ENCODE measurements at regions of chr16 and their contacts with region 1.

Region 1: GRCh38 chr16:66406534-66407221 is 20.4 kb upstream of the BEAN1 start:
- DNase-seq: peak; percentile 75 to 97 (median 87)
- ATAC-seq: peak; percentile 75
- H3K4me3 ChIP-seq: peak overlapping the region; percentile 60 to 66
- H3K4me3 Mint-ChIP-seq: peak overlapping the region; percentile 83
- H3K27ac ChIP-seq: no peak overlapping the region
- H3K27ac Mint-ChIP-seq: no peak overlapping the region
- H3K4me1 ChIP-seq: peaks cover 21% of the 10 kb centered on the region
- H3K4me1 Mint-ChIP-seq: peaks cover 26% of the 10 kb centered on the region
- H3K27me3 ChIP-seq: no peaks in the 10 kb centered on the region
- H3K27me3 Mint-ChIP-seq: peaks cover 5% of the 10 kb centered on the region
- CTCF ChIP-seq: peak; percentile 90

Region 2: GRCh38 chr16:66289051-66289680 is 117.5 kb before region 1 on chr16:
- CTCF ChIA-PET with region 1: no interaction called
- POLR2A ChIA-PET with region 1: no interaction called
- intact Hi-C with region 1: no loop called
- DNase-seq: peak in 1 of 9 experiments; percentile 42
- ATAC-seq: no peak
- H3K4me3 ChIP-seq: no peak overlapping the region
- H3K4me3 Mint-ChIP-seq: no peak overlapping the region
- H3K27ac ChIP-seq: no peak overlapping the region
- H3K27ac Mint-ChIP-seq: no peak overlapping the region
- H3K4me1 ChIP-seq: no peaks in the 10 kb centered on the region
- H3K4me1 Mint-ChIP-seq: no peaks in the 10 kb centered on the region
- H3K27me3 ChIP-seq: peaks cover 0 to 2% of the 10 kb centered on the region in 2 experiments
- H3K27me3 Mint-ChIP-seq: peaks cover 14% of the 10 kb centered on the region
- CTCF ChIP-seq: no peak

Region 3: DNA sequence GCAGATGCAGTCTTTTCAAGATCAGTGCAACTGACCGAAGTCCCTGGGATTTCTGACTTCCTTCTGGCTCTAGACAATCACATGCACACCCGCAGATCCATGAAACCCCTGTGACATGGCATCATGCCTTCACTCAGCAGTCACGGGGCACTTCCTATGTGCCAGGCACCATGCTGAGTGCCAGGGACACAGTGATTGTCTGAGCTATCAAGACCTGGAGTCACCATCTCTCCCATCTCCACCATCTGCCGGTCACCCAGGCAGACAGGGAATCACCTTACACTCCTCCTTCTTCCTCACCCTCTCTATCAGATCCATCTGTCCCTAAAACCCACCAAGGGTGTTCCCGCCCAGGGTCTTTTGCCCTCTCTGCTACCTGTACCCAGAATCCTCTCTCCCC is 25.8 kb after region 1 on chr16:
- CTCF ChIA-PET with region 1: no interaction called
- POLR2A ChIA-PET with region 1: no interaction called
- intact Hi-C with region 1: no loop called
- DNase-seq: peak in 1 of 9 experiments; percentile 45
- ATAC-seq: no peak
- H3K4me3 ChIP-seq: no peak overlapping the region
- H3K4me3 Mint-ChIP-seq: no peak overlapping the region
- H3K27ac ChIP-seq: no peak overlapping the region
- H3K27ac Mint-ChIP-seq: no peak overlapping the region
- H3K4me1 ChIP-seq: peaks cover 10% of the 10 kb centered on the region
- H3K4me1 Mint-ChIP-seq: peaks cover 4% of the 10 kb centered on the region
- H3K27me3 ChIP-seq: peaks cover 9 to 19% of the 10 kb centered on the region in 2 experiments
- H3K27me3 Mint-ChIP-seq: peaks cover 44% of the 10 kb centered on the region
- CTCF ChIP-seq: no peak

Region 4: DNA sequence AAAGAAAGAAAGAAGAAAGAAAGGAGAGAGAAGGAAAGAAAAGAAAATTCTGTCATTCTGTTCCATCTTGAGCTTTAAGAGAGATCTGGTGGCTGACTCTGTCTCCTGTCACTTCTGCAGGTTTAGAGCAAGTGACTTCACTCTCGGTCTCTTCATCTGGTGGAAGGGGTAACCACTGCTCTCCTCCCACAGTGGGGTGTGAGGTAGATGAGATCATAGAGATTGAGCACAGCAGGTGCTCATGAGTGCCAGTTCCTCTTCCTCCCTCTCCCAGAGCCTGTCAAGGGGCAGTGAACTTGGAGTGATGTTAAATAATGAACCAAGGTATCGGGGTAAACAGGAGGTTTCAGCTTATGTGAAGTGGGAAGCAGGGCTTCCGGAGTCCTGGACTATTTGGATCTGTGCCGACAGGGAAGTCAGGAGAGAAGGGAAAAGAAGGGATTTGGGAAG is 68.1 kb after region 1 on chr16:
- CTCF ChIA-PET with region 1: interaction called, 125 read pairs
- POLR2A ChIA-PET with region 1: interaction called, 4 read pairs
- intact Hi-C with region 1: loop called in 1 of 2 experiments (anchors 1 kb)
- DNase-seq: peak in 8 of 9 experiments; percentile 28 to 85 (median 62)
- ATAC-seq: peak; percentile 90
- H3K4me3 ChIP-seq: no peak overlapping the region
- H3K4me3 Mint-ChIP-seq: no peak overlapping the region
- H3K27ac ChIP-seq: peak overlapping the region in 1 of 2 experiments; percentile 6
- H3K27ac Mint-ChIP-seq: peak overlapping the region; percentile 81
- H3K4me1 ChIP-seq: peaks cover 24% of the 10 kb centered on the region
- H3K4me1 Mint-ChIP-seq: peaks cover 26% of the 10 kb centered on the region
- H3K27me3 ChIP-seq: no peaks in the 10 kb centered on the region
- H3K27me3 Mint-ChIP-seq: no peaks in the 10 kb centered on the region
- CTCF ChIP-seq: no peak

Region 5: GRCh38 chr16:66483689-66484481 is 77.2 kb after region 1 on chr16:
- CTCF ChIA-PET with region 1: interaction called, 125 read pairs
- POLR2A ChIA-PET with region 1: interaction called, 3 read pairs
- intact Hi-C with region 1: loop called (anchors 1 kb)
- DNase-seq: peak; percentile 50 to 82 (median 76)
- ATAC-seq: peak; percentile 83
- H3K4me3 ChIP-seq: no peak overlapping the region
- H3K4me3 Mint-ChIP-seq: no peak overlapping the region
- H3K27ac ChIP-seq: no peak overlapping the region
- H3K27ac Mint-ChIP-seq: no peak overlapping the region
- H3K4me1 ChIP-seq: peaks cover 5% of the 10 kb centered on the region
- H3K4me1 Mint-ChIP-seq: peaks cover 16% of the 10 kb centered on the region
- H3K27me3 ChIP-seq: no peaks in the 10 kb centered on the region
- H3K27me3 Mint-ChIP-seq: no peaks in the 10 kb centered on the region
- CTCF ChIP-seq: peak; percentile 92

Region 6: GRCh38 chr16:66588981-66589713 is 182.5 kb after region 1 on chr16:
- CTCF ChIA-PET with region 1: interaction called, 33 read pairs
- POLR2A ChIA-PET with region 1: no interaction called
- intact Hi-C with region 1: loop called (anchors 1 kb)
- DNase-seq: peak; percentile 45 to 85 (median 70)
- ATAC-seq: peak; percentile 94
- H3K4me3 ChIP-seq: no peak overlapping the region
- H3K4me3 Mint-ChIP-seq: peak overlapping the region; percentile 83
- H3K27ac ChIP-seq: no peak overlapping the region
- H3K27ac Mint-ChIP-seq: peak overlapping the region; percentile 49
- H3K4me1 ChIP-seq: peaks cover 25% of the 10 kb centered on the region
- H3K4me1 Mint-ChIP-seq: peaks cover 24% of the 10 kb centered on the region
- H3K27me3 ChIP-seq: no peaks in the 10 kb centered on the region
- H3K27me3 Mint-ChIP-seq: no peaks in the 10 kb centered on the region
- CTCF ChIP-seq: peak; percentile 71

Region 7: GRCh38 chr16:66696669-66697630 is 290.3 kb after region 1 on chr16 and contains the start of gene CMTM4:
- CTCF ChIA-PET with region 1: no interaction called
- POLR2A ChIA-PET with region 1: no interaction called
- intact Hi-C with region 1: loop called in 1 of 2 experiments (anchors 1 kb)
- DNase-seq: peak; percentile 48 to 90 (median 75)
- ATAC-seq: peak; percentile 96
- H3K4me3 ChIP-seq: peak within 1 kb of the TSS; percentile 69 to 83
- H3K4me3 Mint-ChIP-seq: peak within 1 kb of the TSS; percentile 84
- H3K27ac ChIP-seq: no peak within 1 kb of the TSS
- H3K27ac Mint-ChIP-seq: peak within 1 kb of the TSS; percentile 41
- H3K4me1 ChIP-seq: peaks cover 19% of the 10 kb centered on the region
- H3K4me1 Mint-ChIP-seq: peaks cover 17% of the 10 kb centered on the region
- H3K27me3 ChIP-seq: no peaks in the 10 kb centered on the region
- H3K27me3 Mint-ChIP-seq: peaks cover 5% of the 10 kb centered on the region
- CTCF ChIP-seq: no peak
- total RNA-seq, gene CMTM4: 0.84 to 0.89 TPM

Region 8: GRCh38 chr16:66728117-66728787 is 321.6 kb after region 1 on chr16:
- CTCF ChIA-PET with region 1: interaction called, 6 read pairs
- POLR2A ChIA-PET with region 1: no interaction called
- intact Hi-C with region 1: loop called (anchors 1 to 5 kb)
- DNase-seq: peak in 2 of 9 experiments; percentile 49 to 64
- ATAC-seq: peak; percentile 83
- H3K4me3 ChIP-seq: no peak overlapping the region
- H3K4me3 Mint-ChIP-seq: no peak overlapping the region
- H3K27ac ChIP-seq: no peak overlapping the region
- H3K27ac Mint-ChIP-seq: no peak overlapping the region
- H3K4me1 ChIP-seq: no peaks in the 10 kb centered on the region
- H3K4me1 Mint-ChIP-seq: peaks cover 4% of the 10 kb centered on the region
- H3K27me3 ChIP-seq: no peaks in the 10 kb centered on the region
- H3K27me3 Mint-ChIP-seq: no peaks in the 10 kb centered on the region
- CTCF ChIP-seq: peak; percentile 70

Region 9: DNA sequence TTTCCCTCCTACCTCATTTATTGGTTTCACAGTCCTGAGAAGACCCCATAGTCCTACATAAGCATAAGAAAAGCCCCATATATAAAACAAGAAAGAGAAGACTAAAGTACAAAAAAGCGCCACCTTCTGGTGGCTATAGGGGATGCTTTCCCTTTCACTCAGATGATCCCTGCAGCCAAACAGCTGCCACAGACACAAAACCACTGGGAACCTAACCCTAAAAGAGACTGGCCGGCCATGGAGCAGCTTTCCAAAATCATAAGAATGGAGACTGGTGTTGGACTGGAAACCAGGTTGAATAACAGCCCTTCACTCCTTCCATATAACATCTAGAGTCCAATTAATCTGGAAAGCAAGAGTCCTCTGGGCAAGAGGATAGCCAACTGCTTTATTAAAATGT is 333.3 kb after region 1 on chr16:
- CTCF ChIA-PET with region 1: interaction called, 4 read pairs
- POLR2A ChIA-PET with region 1: interaction called, 3 read pairs
- intact Hi-C with region 1: loop called (anchors 1 kb)
- DNase-seq: peak in 4 of 9 experiments; percentile 27 to 63 (median 44)
- ATAC-seq: peak; percentile 79
- H3K4me3 ChIP-seq: no peak overlapping the region
- H3K4me3 Mint-ChIP-seq: no peak overlapping the region
- H3K27ac ChIP-seq: no peak overlapping the region
- H3K27ac Mint-ChIP-seq: no peak overlapping the region
- H3K4me1 ChIP-seq: no peaks in the 10 kb centered on the region
- H3K4me1 Mint-ChIP-seq: peaks cover 24% of the 10 kb centered on the region
- H3K27me3 ChIP-seq: no peaks in the 10 kb centered on the region
- H3K27me3 Mint-ChIP-seq: no peaks in the 10 kb centered on the region
- CTCF ChIP-seq: peak; percentile 65

Region 10: GRCh38 chr16:67183627-67184328 is 777.1 kb after region 1 on chr16 and contains the start of gene MATCAP1:
- CTCF ChIA-PET with region 1: no interaction called
- POLR2A ChIA-PET with region 1: no interaction called
- intact Hi-C with region 1: no loop called
- DNase-seq: peak; percentile 84 to 98 (median 92)
- ATAC-seq: peak; percentile 96
- H3K4me3 ChIP-seq: peak within 1 kb of the TSS; percentile 65 to 76
- H3K4me3 Mint-ChIP-seq: no peak within 1 kb of the TSS
- H3K27ac ChIP-seq: peak within 1 kb of the TSS; percentile 84 to 95
- H3K27ac Mint-ChIP-seq: no peak within 1 kb of the TSS
- H3K4me1 ChIP-seq: peaks cover 20% of the 10 kb centered on the region
- H3K4me1 Mint-ChIP-seq: peaks cover 17% of the 10 kb centered on the region
- H3K27me3 ChIP-seq: peaks cover 0 to 2% of the 10 kb centered on the region in 2 experiments
- H3K27me3 Mint-ChIP-seq: peaks cover 10% of the 10 kb centered on the region
- CTCF ChIP-seq: no peak
- total RNA-seq, gene MATCAP1: 7.7 to 8.0 TPM